Naive thymus-derived CD4-positive, alpha-beta T cell (primary cell): ENCODE measurements at regions of chr16 and their contacts with region 1.

Region 1: DNA sequence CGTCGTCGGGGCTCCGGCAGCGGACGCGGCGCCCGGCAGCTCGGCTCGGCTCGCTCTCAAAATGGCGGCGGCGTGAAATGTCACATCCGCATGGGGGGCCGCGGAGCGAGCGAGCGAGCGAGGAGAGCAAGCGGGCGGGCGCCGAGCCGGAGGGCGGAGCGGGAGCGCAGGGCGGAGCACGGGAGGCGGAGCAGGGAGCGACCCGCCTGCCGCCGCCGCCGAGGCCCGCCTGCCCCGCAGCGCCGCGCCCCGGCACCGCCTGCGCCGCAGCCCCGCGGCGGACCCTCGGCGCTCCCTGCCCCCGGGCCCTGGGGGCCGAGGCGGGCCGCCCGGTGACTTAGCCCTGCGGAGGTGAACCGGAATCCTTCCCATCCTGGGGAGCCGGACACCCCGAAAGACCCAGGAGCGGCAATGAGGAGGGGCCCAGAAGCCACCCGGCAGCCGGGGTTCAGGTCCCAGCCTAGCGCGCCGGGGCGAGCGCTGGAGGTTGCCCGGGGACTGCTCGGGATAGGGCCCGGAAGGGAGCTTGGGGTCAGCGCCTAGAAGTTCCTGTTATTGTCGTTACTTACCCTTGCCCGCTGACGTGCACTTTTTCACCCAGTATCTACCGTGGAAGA is at the start of gene USP7:
- DNase-seq: peak; percentile 86 to 94 (median 92)
- ATAC-seq: peak; percentile 94
- H3K4me3 ChIP-seq: peak within 1 kb of the TSS; percentile 77
- H3K4me3 Mint-ChIP-seq: peak within 1 kb of the TSS; percentile 90 to 98 (median 95)
- H3K27ac ChIP-seq: peak within 1 kb of the TSS; percentile 85
- H3K27ac Mint-ChIP-seq: peak within 1 kb of the TSS; percentile 80 to 97 (median 92)
- H3K4me1 ChIP-seq: peaks cover 30 to 34% of the 10 kb centered on the region in 2 donors
- H3K4me1 Mint-ChIP-seq: peaks cover 35 to 42% (median 40%) of the 10 kb centered on the region in 7 donors
- H3K27me3 ChIP-seq: no peaks in the 10 kb centered on the region
- H3K27me3 Mint-ChIP-seq: peaks cover 0 to 18% (median 0%) of the 10 kb centered on the region in 5 donors
- total RNA-seq, gene USP7: 175 to 261 (median 178) TPM

Region 2: DNA sequence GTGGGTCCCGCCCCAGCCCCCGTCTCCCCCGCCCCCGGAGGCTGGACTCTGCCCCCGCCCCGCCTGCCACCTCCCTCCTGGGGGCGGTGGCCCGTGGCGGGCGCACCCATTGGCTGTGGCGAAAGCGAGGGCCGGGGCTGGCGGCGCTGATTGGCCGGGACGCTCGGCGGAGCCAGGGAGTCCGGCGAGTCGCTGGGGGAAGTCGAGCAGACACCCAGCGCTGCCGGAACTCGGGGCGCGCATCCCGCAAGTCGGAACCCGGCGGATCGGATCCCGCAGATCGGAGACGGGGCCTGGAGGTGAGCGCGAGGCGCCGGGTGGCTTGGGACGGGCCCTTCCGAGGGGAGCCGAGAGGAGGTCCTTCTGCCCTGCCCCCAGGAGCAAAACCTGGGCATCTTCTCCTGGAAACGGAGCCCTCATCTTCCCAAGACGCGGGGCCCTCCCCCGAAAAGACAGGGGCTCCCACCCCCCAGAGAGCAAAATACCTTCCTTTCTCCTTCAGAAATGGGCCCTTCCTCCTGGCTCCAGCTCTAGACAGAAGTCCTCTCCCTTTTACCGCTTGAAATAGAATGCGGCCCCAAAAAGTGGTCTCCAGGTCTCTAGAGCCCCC is 289.4 kb before region 1 on chr16 and contains the start of gene ABAT:
- CTCF ChIA-PET with region 1: no interaction called
- POLR2A ChIA-PET with region 1: no interaction called
- intact Hi-C with region 1: loop called in 1 of 2 experiments (anchors 2 kb)
- DNase-seq: peak; percentile 83 to 92 (median 87)
- ATAC-seq: peak; percentile 99
- H3K4me3 ChIP-seq: peak within 1 kb of the TSS; percentile 57
- H3K4me3 Mint-ChIP-seq: peak within 1 kb of the TSS; percentile 78 to 93 (median 88)
- H3K27ac ChIP-seq: peak within 1 kb of the TSS; percentile 70
- H3K27ac Mint-ChIP-seq: peak within 1 kb of the TSS; percentile 58 to 91 (median 78)
- H3K4me1 ChIP-seq: peaks cover 9 to 18% of the 10 kb centered on the region in 2 donors
- H3K4me1 Mint-ChIP-seq: peaks cover 6 to 22% (median 19%) of the 10 kb centered on the region in 7 donors
- H3K27me3 ChIP-seq: no peaks in the 10 kb centered on the region
- H3K27me3 Mint-ChIP-seq: peaks cover 0 to 7% (median 0%) of the 10 kb centered on the region in 5 donors
- total RNA-seq, gene ABAT: 5.4 to 11.5 (median 9.3) TPM

Region 3: GRCh38 chr16:8905168-8905762 is 58.7 kb before region 1 on chr16:
- CTCF ChIA-PET with region 1: no interaction called
- POLR2A ChIA-PET with region 1: no interaction called
- intact Hi-C with region 1: loop called (anchors 5 to 10 kb)
- DNase-seq: peak in 4 of 9 donors; percentile 18 to 39 (median 30)
- ATAC-seq: peak; percentile 63
- H3K4me3 ChIP-seq: no peak overlapping the region
- H3K4me3 Mint-ChIP-seq: no peak overlapping the region
- H3K27ac ChIP-seq: no peak overlapping the region
- H3K27ac Mint-ChIP-seq: peak overlapping the region in 3 of 9 donors; percentile 29 to 59 (median 42)
- H3K4me1 ChIP-seq: peaks cover 0 to 7% of the 10 kb centered on the region in 2 donors
- H3K4me1 Mint-ChIP-seq: peaks cover 6 to 29% (median 16%) of the 10 kb centered on the region in 7 donors
- H3K27me3 ChIP-seq: no peaks in the 10 kb centered on the region
- H3K27me3 Mint-ChIP-seq: no peaks in the 10 kb centered on the region

Region 4: GRCh38 chr16:8936421-8936820 is 27.5 kb before region 1 on chr16:
- CTCF ChIA-PET with region 1: interaction called, 3 read pairs
- POLR2A ChIA-PET with region 1: interaction called, 4 read pairs
- intact Hi-C with region 1: loop called (anchors 1 to 2 kb)
- DNase-seq: peak; percentile 29 to 75 (median 60)
- ATAC-seq: peak; percentile 94
- H3K4me3 ChIP-seq: no peak overlapping the region
- H3K4me3 Mint-ChIP-seq: peak overlapping the region in 8 of 10 donors; percentile 3 to 60 (median 38)
- H3K27ac ChIP-seq: no peak overlapping the region
- H3K27ac Mint-ChIP-seq: peak overlapping the region in 6 of 9 donors; percentile 21 to 87 (median 63)
- H3K4me1 ChIP-seq: peaks cover 35 to 43% of the 10 kb centered on the region in 2 donors
- H3K4me1 Mint-ChIP-seq: peaks cover 54 to 98% (median 93%) of the 10 kb centered on the region in 7 donors
- H3K27me3 ChIP-seq: no peaks in the 10 kb centered on the region
- H3K27me3 Mint-ChIP-seq: no peaks in the 10 kb centered on the region

Region 5: GRCh38 chr16:8998114-8998513 is 34.2 kb after region 1 on chr16:
- CTCF ChIA-PET with region 1: no interaction called
- POLR2A ChIA-PET with region 1: no interaction called
- intact Hi-C with region 1: no loop called
- DNase-seq: no peak
- ATAC-seq: no peak
- H3K4me3 ChIP-seq: no peak overlapping the region
- H3K4me3 Mint-ChIP-seq: no peak overlapping the region
- H3K27ac ChIP-seq: no peak overlapping the region
- H3K27ac Mint-ChIP-seq: no peak overlapping the region
- H3K4me1 ChIP-seq: no peaks in the 10 kb centered on the region
- H3K4me1 Mint-ChIP-seq: no peaks in the 10 kb centered on the region
- H3K27me3 ChIP-seq: no peaks in the 10 kb centered on the region
- H3K27me3 Mint-ChIP-seq: no peaks in the 10 kb centered on the region

Region 6: DNA sequence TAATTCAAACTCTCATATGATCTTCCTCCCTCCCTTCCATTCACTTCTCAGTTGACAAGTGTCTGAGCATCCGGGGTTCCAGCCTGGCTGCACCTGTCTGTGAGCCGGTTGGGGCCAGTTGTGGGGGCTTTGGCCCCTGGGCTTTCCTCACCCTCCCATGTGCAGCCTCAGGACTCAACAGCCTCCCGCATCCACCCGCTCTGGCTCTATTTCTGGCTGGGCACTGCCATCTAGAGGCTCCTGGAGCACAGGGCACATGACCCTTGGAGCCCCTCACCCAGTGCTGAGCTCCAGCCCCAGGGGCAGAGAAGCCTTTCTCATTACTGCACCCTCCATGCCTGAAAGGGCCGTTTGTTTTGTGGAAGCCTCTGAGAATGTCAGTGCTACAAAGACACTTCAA is 170.8 kb after region 1 on chr16:
- CTCF ChIA-PET with region 1: no interaction called
- POLR2A ChIA-PET with region 1: no interaction called
- intact Hi-C with region 1: loop called in 1 of 2 experiments (anchors 5 kb)
- DNase-seq: peak; percentile 21 to 63 (median 51)
- ATAC-seq: peak; percentile 78
- H3K4me3 ChIP-seq: no peak overlapping the region
- H3K4me3 Mint-ChIP-seq: no peak overlapping the region
- H3K27ac ChIP-seq: no peak overlapping the region
- H3K27ac Mint-ChIP-seq: peak overlapping the region in 1 of 9 donors; percentile 59
- H3K4me1 ChIP-seq: peaks cover 0 to 9% of the 10 kb centered on the region in 2 donors
- H3K4me1 Mint-ChIP-seq: peaks cover 10 to 24% (median 16%) of the 10 kb centered on the region in 7 donors
- H3K27me3 ChIP-seq: no peaks in the 10 kb centered on the region
- H3K27me3 Mint-ChIP-seq: peaks cover 0 to 10% (median 6%) of the 10 kb centered on the region in 5 donors

Region 7: DNA sequence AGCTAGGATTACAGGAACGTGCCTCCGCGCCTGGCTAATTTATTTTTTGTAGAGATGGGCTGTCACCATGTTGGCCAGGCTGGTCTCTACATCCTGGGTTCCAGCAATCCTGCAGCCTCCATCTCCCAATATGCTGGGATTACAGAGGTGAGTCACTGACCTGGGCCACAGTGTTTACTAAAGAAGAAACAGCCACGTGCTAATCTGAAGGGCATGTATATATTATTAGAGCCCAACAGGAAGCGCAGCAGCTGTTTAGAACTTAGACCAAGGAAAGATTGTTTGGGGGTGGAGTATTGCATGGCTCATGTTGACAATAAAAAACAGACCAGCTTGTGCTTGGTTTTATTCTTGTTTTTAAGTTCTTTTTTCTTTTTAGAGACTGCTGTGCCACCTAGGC is 187.7 kb after region 1 on chr16:
- CTCF ChIA-PET with region 1: no interaction called
- POLR2A ChIA-PET with region 1: no interaction called
- intact Hi-C with region 1: no loop called
- DNase-seq: no peak
- ATAC-seq: no peak
- H3K4me3 ChIP-seq: no peak overlapping the region
- H3K4me3 Mint-ChIP-seq: no peak overlapping the region
- H3K27ac ChIP-seq: no peak overlapping the region
- H3K27ac Mint-ChIP-seq: no peak overlapping the region
- H3K4me1 ChIP-seq: no peaks in the 10 kb centered on the region
- H3K4me1 Mint-ChIP-seq: no peaks in the 10 kb centered on the region
- H3K27me3 ChIP-seq: no peaks in the 10 kb centered on the region
- H3K27me3 Mint-ChIP-seq: peaks cover 6 to 30% (median 11%) of the 10 kb centered on the region in 5 donors